ENCODE measurements at regions of chr19 and their contacts with region 1.

Region 1: DNA sequence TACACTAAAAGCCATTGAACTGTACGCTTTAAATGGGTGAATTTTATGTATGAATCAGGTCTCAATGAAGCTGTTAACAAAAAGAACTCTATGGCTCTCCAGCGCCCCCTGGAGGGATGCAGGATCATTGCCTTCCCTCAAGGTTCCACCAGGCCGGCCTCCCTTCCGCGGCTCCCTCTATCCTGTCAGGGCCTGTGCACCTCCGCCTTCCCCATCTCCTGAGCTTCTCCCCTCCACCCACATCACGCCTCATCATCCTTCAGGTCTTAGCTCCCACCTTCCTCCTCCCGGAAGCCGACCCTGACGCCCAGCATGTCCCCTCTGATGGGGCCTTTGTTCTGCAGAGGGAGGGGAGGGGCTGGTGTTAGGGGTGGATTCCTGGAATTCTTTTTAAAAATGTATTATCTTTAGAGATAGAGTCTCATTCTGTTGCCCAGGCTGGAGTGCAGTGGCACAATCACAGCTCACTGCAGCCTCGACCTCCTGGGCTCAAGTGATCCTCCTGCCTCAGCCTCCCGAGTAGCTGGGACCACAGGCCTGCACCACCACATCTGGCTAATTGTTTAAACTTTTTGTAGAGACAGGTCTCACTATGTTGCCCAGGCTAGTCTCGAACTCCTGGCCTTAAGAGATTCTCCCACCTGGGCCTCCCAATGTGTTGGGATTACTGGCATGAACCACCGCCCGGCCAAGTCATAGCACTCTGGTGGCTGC is 27.7 kb downstream of the MEIS3 start:
- DNase-seq: peak; percentile 64 to 84 (median 72)
- ATAC-seq: peak; percentile 42 to 85 (median 80)
- H3K4me3 ChIP-seq: no peak overlapping the region
- H3K27ac ChIP-seq: no peak overlapping the region
- H3K4me1 ChIP-seq: peaks cover 0 to 26% (median 0%) of the 10 kb centered on the region in 12 donors
- H3K27me3 ChIP-seq: peaks cover 0 to 7% (median 0%) of the 10 kb centered on the region in 9 donors
- CTCF ChIP-seq: peak; percentile 82 to 94 (median 88)
- POLR2A ChIP-seq: no peak

Region 2: DNA sequence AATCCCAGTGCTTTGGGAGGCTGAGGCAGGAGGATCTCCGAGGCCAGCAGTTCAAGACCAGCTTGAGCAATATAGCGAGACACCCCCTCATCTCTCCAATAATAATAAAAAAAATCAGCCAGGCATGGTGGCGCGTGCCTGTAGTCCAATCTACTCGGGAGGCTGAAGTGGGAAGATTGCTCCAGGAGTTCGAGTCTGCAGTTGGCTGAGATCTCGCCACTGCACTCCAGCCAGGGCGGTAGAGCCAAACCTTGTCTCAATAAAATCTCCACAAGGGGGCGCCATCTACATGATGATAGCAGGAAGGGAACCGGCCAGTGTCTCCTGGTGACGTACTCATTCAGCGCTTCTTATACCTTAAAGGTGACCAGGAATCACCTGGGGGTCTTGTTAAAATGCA is 95.6 kb before region 1 on chr19:
- intact Hi-C with region 1: loop called (anchors 1 to 10 kb)
- DNase-seq: peak in 4 of 5 donors; percentile 67 to 76 (median 72)
- ATAC-seq: peak in 3 of 4 donors; percentile 87 to 88 (median 88)
- H3K4me3 ChIP-seq: no peak overlapping the region
- H3K27ac ChIP-seq: no peak overlapping the region
- H3K4me1 ChIP-seq: no peaks in the 10 kb centered on the region
- H3K27me3 ChIP-seq: no peaks in the 10 kb centered on the region
- CTCF ChIP-seq: peak; percentile 66 to 79 (median 74)
- POLR2A ChIP-seq: no peak

Region 3: GRCh38 chr19:47305309-47305751 is 86.3 kb before region 1 on chr19:
- intact Hi-C with region 1: loop called in 1 of 10 experiments (anchors 5 kb)
- DNase-seq: peak; percentile 34 to 85 (median 64)
- ATAC-seq: peak in 2 of 4 donors; percentile 34 to 73
- H3K4me3 ChIP-seq: no peak overlapping the region
- H3K27ac ChIP-seq: no peak overlapping the region
- H3K4me1 ChIP-seq: peaks cover 0 to 8% (median 0%) of the 10 kb centered on the region in 12 donors
- H3K27me3 ChIP-seq: no peaks in the 10 kb centered on the region
- CTCF ChIP-seq: peak; percentile 87 to 95 (median 90)
- POLR2A ChIP-seq: no peak

Region 4: GRCh38 chr19:47456721-47457478 is 65.2 kb after region 1 on chr19:
- intact Hi-C with region 1: no loop called
- DNase-seq: peak in 1 of 5 donors; percentile 52
- ATAC-seq: no peak
- H3K4me3 ChIP-seq: no peak overlapping the region
- H3K27ac ChIP-seq: no peak overlapping the region
- H3K4me1 ChIP-seq: peaks cover 0 to 8% (median 0%) of the 10 kb centered on the region in 12 donors
- H3K27me3 ChIP-seq: peaks cover 16 to 69% (median 41%) of the 10 kb centered on the region in 9 donors
- CTCF ChIP-seq: no peak
- POLR2A ChIP-seq: no peak